OCI-LY7 (cell line): ENCODE measurements at regions of chrX and their contacts with region 1.

Region 1: DNA sequence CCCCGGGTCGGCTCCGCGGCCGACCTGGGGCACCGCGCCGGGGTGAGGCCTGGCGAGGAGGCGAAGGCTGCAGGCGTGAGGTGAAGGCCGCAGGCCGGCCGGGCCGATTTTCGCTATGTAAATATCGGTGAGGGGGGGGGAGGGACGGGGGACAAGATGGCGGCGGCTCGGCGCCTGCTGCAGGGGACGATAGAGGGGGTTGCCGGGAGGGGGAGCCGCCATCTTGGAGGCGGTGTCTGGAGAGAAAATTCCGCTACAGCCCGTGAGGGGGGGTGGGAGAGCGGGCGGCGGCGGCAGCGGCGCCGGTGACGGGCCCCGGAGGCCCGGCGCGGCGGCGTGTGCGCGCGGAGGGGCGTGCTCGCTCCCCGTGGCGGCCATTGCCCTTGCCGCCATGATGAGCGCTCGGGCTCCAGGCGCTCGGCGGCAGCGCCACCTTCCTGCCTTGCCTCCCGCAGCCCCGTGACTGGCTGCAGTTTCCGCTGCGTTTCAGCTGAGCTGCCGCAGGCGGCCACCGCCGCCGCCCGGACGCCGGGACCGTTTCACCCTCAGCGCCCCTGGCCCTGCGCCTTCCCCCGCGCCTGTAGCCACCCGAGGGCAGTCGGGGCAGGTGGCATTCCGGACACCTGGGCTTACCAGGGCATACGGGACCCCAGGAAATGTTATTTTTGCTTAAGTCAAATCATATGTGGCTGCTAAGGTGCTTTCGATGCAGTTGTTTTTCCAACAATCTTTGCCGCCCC is 692 bp downstream of the ZFX start:
- DNase-seq: peak; percentile 87
- H3K4me3 ChIP-seq: peak overlapping the region; percentile 75
- H3K27ac ChIP-seq: peak overlapping the region; percentile 88
- H3K4me1 ChIP-seq: peaks cover 61% of the 10 kb centered on the region
- CTCF ChIP-seq: peak; percentile 47; the same call in 1 of the 2 replicates

Region 2: DNA sequence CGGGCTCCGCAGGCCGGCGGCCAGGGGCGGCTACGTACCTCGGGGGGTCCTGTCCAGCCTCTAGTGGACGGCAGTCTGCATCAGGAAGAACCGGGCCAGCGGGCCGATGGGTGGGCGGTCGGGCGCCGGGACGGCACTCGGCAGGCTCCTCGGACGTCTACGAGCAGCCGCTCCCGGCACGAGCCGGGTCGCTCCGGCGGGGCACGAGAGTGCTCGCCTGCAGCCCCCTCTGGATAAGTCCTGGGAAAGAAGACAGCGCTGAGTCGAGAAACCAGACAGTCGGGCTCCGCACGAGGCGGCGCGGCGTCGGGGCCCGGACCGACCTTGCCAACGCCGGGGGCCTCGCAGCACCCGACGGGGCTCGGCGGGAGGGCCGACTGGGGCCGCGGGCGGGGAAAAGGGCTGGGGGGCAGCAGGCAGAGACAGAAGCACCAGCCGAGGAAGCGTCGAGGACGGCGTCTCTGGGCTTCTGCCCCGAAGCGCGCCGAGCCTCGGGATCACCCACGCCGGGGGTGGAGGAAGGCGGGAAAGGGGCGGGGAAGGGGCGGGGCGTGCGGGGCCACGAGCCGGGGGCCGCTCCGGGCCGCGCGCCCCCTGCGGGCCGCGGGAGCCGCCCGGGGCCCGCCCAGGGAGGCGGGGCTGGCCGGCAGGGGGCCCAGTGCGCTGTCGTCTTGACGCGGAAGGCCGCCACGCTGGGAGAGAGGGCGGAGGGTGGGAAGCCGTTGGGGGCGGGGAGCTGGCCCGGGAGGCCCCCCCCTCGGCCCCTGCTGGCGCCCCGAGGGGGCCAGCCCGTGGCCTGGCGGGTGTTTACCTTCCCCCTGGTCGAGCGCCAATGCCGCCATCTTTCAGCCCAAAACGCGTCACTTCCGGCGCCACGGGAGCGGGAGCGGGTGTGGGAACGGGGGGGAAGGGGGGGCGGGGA is 125.1 kb before region 1 on chrX:
- CTCF ChIA-PET with region 1: no interaction called
- POLR2A ChIA-PET with region 1: no interaction called
- intact Hi-C with region 1: loop called (anchors 10 kb)
- DNase-seq: peak; percentile 88
- H3K4me3 ChIP-seq: peak overlapping the region; percentile 94
- H3K27ac ChIP-seq: peak overlapping the region; percentile 78
- H3K4me1 ChIP-seq: peaks cover 27% of the 10 kb centered on the region
- CTCF ChIP-seq: 0 out of 2 replicates have a peak, but pooled peaks have one; percentile 2

Region 3: DNA sequence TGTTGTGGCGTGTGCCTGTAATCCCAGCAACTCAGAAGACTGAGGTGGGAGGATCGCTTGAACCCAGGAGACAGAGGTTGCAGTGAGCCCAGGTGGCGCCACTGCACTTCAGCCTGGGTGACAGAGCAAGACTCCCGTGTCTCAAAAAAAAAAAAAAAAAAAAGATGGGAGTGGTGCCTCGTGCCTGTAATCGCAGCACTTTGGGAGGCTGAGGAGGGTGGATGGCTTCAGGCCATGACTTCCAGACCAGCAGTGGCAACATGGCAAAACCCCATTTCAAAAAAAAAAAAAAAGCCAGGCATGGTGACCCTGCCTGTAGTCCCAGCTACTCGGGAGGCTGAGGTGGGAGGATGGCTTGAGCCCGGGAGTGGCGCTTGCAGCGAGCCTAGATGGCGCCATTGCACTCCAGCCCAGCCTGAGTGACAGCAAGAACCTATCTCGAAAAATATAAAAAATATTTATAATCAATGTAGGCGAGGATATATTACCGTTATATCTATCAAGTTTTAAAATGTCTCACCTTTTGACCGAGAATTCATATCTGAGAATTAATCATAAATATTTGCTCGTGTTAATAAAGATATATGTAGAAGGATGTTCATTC is 68.5 kb before region 1 on chrX:
- CTCF ChIA-PET with region 1: no interaction called
- POLR2A ChIA-PET with region 1: interaction called, 3 read pairs
- intact Hi-C with region 1: loop called (anchors 1 kb)
- DNase-seq: peak; percentile 65
- H3K4me3 ChIP-seq: no peak overlapping the region
- H3K27ac ChIP-seq: no peak overlapping the region
- H3K4me1 ChIP-seq: peaks cover 8% of the 10 kb centered on the region
- CTCF ChIP-seq: peak; percentile 67

Region 4: GRCh38 chrX:24241822-24242648 is 91.8 kb after region 1 on chrX:
- CTCF ChIA-PET with region 1: no interaction called
- POLR2A ChIA-PET with region 1: interaction called, 3 read pairs
- intact Hi-C with region 1: loop called (anchors 2 kb)
- DNase-seq: peak; percentile 62
- H3K4me3 ChIP-seq: no peak overlapping the region
- H3K27ac ChIP-seq: peak overlapping the region; percentile 73
- H3K4me1 ChIP-seq: peaks cover 26% of the 10 kb centered on the region
- CTCF ChIP-seq: peak; percentile 74

Region 5: GRCh38 chrX:24316111-24316510 is 165.9 kb after region 1 on chrX:
- CTCF ChIA-PET with region 1: no interaction called
- POLR2A ChIA-PET with region 1: no interaction called
- intact Hi-C with region 1: no loop called
- DNase-seq: no peak
- H3K4me3 ChIP-seq: no peak overlapping the region
- H3K27ac ChIP-seq: no peak overlapping the region
- H3K4me1 ChIP-seq: no peaks in the 10 kb centered on the region
- CTCF ChIP-seq: no peak

Region 6: GRCh38 chrX:24693453-24694202 is 543.4 kb after region 1 on chrX and contains the start of gene POLA1:
- CTCF ChIA-PET with region 1: no interaction called
- POLR2A ChIA-PET with region 1: no interaction called
- intact Hi-C with region 1: loop called (anchors 2 kb)
- DNase-seq: peak; percentile 91
- H3K4me3 ChIP-seq: peak within 1 kb of the TSS; percentile 94
- H3K27ac ChIP-seq: peak within 1 kb of the TSS; percentile 63
- H3K4me1 ChIP-seq: peaks cover 32% of the 10 kb centered on the region
- CTCF ChIP-seq: no peak
- total RNA-seq, gene POLA1: 58.0 and 60.1 TPM in 2 replicates